ENCODE measurements at regions of chr14 and their contacts with region 1.

Region 1: GRCh38 chr14:58244556-58245387 is at the start of gene PSMA3:
- DNase-seq: peak; percentile 97
- ATAC-seq: peak; percentile 87
- H3K4me3 ChIP-seq: peak within 1 kb of the TSS; percentile 89 to 100 (median 97)
- H3K4me3 Mint-ChIP-seq: peak within 1 kb of the TSS; percentile 96
- H3K27ac ChIP-seq: peak within 1 kb of the TSS; percentile 90 to 92
- H3K27ac Mint-ChIP-seq: peak within 1 kb of the TSS; percentile 96
- H3K4me1 ChIP-seq: peaks cover 9 to 19% of the 10 kb centered on the region in 2 donors
- H3K4me1 Mint-ChIP-seq: peaks cover 44% of the 10 kb centered on the region
- H3K27me3 ChIP-seq: no peaks in the 10 kb centered on the region
- H3K27me3 Mint-ChIP-seq: no peaks in the 10 kb centered on the region
- CTCF ChIP-seq: no peak
- total RNA-seq, gene PSMA3: 98.1 and 99.2 TPM in 2 replicates

Region 2: GRCh38 chr14:57326253-57326652 is 918.5 kb before region 1 on chr14:
- CTCF ChIA-PET with region 1: no interaction called
- POLR2A ChIA-PET with region 1: interaction called, 10 read pairs
- intact Hi-C with region 1: no loop called
- DNase-seq: peak; percentile 54
- ATAC-seq: peak; percentile 90
- H3K4me3 ChIP-seq: no peak overlapping the region
- H3K4me3 Mint-ChIP-seq: no peak overlapping the region
- H3K27ac ChIP-seq: no peak overlapping the region
- H3K27ac Mint-ChIP-seq: peak overlapping the region; percentile 46
- H3K4me1 ChIP-seq: peaks cover 5 to 7% of the 10 kb centered on the region in 2 donors
- H3K4me1 Mint-ChIP-seq: peaks cover 10% of the 10 kb centered on the region
- H3K27me3 ChIP-seq: peaks cover 0 to under 1% (median 0%) of the 10 kb centered on the region in 4 experiments
- H3K27me3 Mint-ChIP-seq: peaks cover 13% of the 10 kb centered on the region
- CTCF ChIP-seq: no peak

Region 3: GRCh38 chr14:57796556-57796955 is 448.2 kb before region 1 on chr14:
- CTCF ChIA-PET with region 1: no interaction called
- POLR2A ChIA-PET with region 1: no interaction called
- intact Hi-C with region 1: no loop called
- DNase-seq: no peak
- ATAC-seq: no peak
- H3K4me3 ChIP-seq: no peak overlapping the region
- H3K4me3 Mint-ChIP-seq: no peak overlapping the region
- H3K27ac ChIP-seq: no peak overlapping the region
- H3K27ac Mint-ChIP-seq: no peak overlapping the region
- H3K4me1 ChIP-seq: no peaks in the 10 kb centered on the region
- H3K4me1 Mint-ChIP-seq: no peaks in the 10 kb centered on the region
- H3K27me3 ChIP-seq: no peaks in the 10 kb centered on the region
- H3K27me3 Mint-ChIP-seq: no peaks in the 10 kb centered on the region
- CTCF ChIP-seq: no peak

Measured in B cell (primary cell).